Activated CD8-positive, alpha-beta memory T cell treated with anti-CD3 and anti-CD28 coated beads, Interleukin-2, amount 10 ng/mL, durations not matched to agents 7 days and 5 days (primary cell): ENCODE measurements at regions of chr1 and their contacts with region 1.

Region 1: DNA sequence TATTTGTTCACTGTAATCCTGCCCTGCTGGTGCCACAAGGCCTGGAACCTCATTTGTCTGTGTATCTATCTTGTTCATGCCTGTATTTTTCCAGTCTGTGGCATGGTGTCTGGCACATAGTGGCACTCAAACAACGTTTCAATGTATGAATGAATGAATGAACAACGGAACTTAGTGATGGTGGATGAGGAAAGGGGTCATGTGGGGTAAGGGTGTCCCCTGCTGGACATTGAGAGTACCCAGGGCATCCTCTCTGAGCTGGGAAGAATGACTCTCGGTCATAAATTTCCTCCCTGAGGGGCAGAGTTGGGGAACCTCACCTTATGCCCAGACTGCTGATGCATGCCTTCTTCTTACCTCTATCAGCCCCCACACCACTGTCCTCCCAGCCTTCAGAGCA is 18.9 kb upstream of the ZNF683 start:
- DNase-seq: peak; percentile 78
- ATAC-seq: peak; percentile 80
- H3K4me3 Mint-ChIP-seq: no peak overlapping the region
- H3K27ac Mint-ChIP-seq: peak overlapping the region; percentile 62
- H3K4me1 Mint-ChIP-seq: peaks cover 55% of the 10 kb centered on the region
- H3K27me3 Mint-ChIP-seq: peaks cover 4% of the 10 kb centered on the region

Region 2: GRCh38 chr1:26132834-26133167 is 258.6 kb before region 1 on chr1:
- CTCF ChIA-PET with region 1: no interaction called
- DNase-seq: no peak
- ATAC-seq: no peak
- H3K4me3 Mint-ChIP-seq: no peak overlapping the region
- H3K27ac Mint-ChIP-seq: no peak overlapping the region
- H3K4me1 Mint-ChIP-seq: peaks cover 7% of the 10 kb centered on the region
- H3K27me3 Mint-ChIP-seq: peaks cover 6% of the 10 kb centered on the region

Region 3: GRCh38 chr1:26279456-26280332 is 111.8 kb before region 1 on chr1 and contains the start of gene SH3BGRL3:
- CTCF ChIA-PET with region 1: interaction called, 96 read pairs
- DNase-seq: peak; percentile 90
- ATAC-seq: peak; percentile 66
- H3K4me3 Mint-ChIP-seq: peak within 1 kb of the TSS; percentile 89
- H3K27ac Mint-ChIP-seq: peak within 1 kb of the TSS; percentile 99
- H3K4me1 Mint-ChIP-seq: peaks cover 84% of the 10 kb centered on the region
- H3K27me3 Mint-ChIP-seq: no peaks in the 10 kb centered on the region
- total RNA-seq, gene SH3BGRL3: 562 to 632 TPM

Region 4: DNA sequence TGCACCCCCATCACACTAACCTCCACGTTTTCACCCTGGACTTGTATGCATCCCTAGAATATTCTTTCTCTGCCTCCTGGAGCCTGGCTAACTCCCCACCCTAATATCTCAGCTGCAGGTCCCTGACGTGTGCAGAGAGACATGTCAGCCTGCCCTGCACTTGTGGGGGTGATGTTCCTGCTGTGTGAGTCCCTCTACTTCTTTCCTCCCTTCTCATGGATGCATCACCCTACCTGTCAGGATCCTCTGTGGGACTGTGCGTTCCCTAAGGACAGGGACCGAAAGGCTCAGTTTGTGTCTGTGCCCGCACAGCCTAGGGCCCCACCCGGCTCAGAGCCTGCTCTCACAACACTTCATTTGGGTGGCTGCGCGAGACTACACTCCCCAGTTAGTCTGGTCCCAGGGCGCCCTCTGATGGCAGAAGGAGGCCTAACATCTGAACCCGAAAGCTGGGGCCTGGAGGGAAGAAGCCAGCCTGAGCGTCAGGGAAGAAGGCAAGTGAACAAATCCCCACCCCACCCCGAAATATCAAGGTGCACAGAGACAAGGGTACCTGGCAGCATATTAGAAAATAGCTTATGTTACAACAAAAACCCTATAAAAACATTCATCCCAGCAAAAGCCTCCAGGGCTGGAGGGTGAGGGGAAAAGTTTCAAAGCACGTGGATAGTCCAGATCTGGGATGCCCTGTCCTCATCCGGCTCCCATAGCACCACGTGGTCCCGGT is 70.0 kb before region 1 on chr1:
- CTCF ChIA-PET with region 1: interaction called, 39 read pairs
- DNase-seq: peak; percentile 97
- ATAC-seq: peak; percentile 74
- H3K4me3 Mint-ChIP-seq: peak overlapping the region; percentile 73
- H3K27ac Mint-ChIP-seq: peak overlapping the region; percentile 95
- H3K4me1 Mint-ChIP-seq: peaks cover 49% of the 10 kb centered on the region
- H3K27me3 Mint-ChIP-seq: no peaks in the 10 kb centered on the region

Region 5: DNA sequence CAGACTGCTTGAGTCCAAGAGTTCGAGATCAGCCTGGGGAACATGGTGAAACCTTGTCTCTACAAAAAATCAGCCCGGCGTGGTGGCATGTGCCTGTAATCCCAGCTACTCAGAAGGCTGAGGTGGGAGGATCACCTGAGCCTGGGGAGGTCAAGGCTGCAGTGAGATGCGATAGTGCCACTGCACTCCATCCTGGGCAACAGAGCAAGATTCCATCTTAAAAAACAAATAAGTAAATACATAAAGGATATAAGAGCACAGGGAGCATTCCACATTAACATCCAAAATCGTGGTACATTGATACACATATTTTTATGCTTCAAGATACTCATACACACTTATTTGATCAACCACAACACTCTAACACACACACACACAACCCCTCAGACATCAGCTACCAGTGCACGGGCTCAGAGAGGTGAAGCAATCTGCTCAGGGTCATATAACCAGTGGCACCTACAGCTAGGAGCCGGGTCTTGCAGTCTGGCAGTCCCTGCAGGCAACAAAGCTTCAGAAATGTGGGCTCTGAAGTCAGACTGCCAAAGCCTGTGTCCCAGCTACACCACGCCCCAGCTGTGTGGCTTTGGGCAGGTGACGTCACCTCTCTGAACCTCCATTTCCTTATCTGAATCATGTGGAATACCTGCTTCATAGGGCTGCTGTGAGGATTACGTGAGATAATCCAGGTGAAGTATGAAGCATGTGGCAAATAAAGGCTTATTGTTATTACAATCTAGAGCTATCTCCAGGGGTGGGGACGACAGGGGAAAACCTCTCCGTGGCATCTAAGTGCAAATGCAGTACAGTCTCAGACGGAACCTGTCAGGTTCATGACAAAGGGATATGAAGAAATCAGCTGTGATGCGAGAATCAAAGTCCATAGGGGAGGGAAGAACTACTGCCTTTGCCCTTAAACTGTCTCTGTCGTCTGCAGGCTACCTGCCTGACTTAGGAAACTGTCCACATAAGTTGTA is 32.8 kb before region 1 on chr1:
- CTCF ChIA-PET with region 1: interaction called, 65 read pairs
- DNase-seq: peak; percentile 93
- ATAC-seq: peak; percentile 89
- H3K4me3 Mint-ChIP-seq: peak overlapping the region; percentile 48
- H3K27ac Mint-ChIP-seq: peak overlapping the region; percentile 66
- H3K4me1 Mint-ChIP-seq: peaks cover 51% of the 10 kb centered on the region
- H3K27me3 Mint-ChIP-seq: peaks cover 13% of the 10 kb centered on the region

Region 6: GRCh38 chr1:26372039-26372438 is 19.4 kb before region 1 on chr1:
- CTCF ChIA-PET with region 1: interaction called, 180 read pairs
- DNase-seq: no peak
- ATAC-seq: no peak
- H3K4me3 Mint-ChIP-seq: no peak overlapping the region
- H3K27ac Mint-ChIP-seq: peak overlapping the region; percentile 82
- H3K4me1 Mint-ChIP-seq: peaks cover 74% of the 10 kb centered on the region
- H3K27me3 Mint-ChIP-seq: no peaks in the 10 kb centered on the region